ENCODE measurements at regions of chr2 and their contacts with region 1.

Region 1: DNA sequence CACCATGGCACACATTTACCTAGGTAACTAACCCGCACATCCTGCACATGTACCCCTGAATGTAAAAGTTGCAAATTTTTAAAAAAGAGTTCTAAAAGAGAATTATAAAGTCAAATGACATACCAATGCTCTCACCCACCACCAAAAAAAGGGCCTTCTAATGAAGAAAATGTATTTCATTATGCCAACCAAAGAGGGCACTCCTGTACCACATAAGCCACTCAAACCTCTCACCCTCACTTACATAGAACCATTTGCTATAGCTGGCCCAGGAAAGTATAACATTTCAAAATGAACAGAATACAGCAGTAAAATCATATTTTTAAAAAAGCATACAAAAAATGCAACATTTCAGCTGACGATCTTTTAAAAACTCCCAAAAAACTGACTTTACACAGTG is 241.5 kb upstream of the PKDCC start:
- DNase-seq: peak; percentile 43
- H3K4me3 Mint-ChIP-seq: no peak overlapping the region
- H3K27ac Mint-ChIP-seq: no peak overlapping the region
- H3K4me1 Mint-ChIP-seq: peaks cover 9% of the 10 kb centered on the region
- H3K27me3 Mint-ChIP-seq: no peaks in the 10 kb centered on the region
- CTCF ChIP-seq: peak; percentile 38

Region 2: DNA sequence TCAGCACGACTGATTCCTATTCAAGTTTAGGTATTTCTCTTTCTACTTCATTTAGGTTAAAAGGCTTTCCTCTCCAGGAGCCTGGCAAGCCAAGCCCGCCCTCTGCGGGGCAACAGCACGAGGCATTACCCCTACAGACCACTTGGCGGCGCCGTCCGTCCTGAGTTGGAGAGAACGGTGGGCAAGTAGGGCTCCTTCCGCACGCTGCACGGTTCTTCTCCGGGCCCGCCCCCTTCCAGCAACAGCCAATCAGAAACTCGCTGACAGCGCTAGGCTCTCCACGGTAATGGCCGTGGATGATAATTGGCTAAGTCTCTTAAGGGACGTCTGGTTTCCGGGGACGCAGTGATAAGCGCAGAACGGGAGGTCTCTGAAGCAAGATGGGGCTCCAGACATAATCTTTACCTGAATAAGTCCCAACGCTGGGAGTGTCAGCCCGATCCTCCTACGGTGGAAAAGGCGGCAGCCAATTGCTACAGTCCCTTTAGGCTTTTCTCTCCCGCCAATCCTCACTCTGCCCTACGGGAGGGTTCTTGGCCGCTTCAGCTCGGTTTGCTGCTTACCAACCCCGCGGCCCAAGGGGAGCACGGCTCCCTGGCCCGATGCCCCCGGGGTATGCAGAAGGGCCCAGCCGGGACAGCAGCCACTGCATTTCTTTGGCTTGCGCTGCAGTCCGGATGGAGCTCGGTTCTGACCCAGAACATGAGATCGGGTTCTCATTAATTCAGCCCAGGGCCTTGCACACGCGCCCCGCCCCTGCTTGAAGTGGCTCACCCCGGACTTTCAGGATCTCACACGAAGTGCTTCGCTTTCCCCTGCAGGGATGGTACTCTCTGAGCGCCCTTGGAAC is 34.6 kb after region 1 on chr2:
- CTCF ChIA-PET with region 1: interaction called, 3 read pairs
- intact Hi-C with region 1: loop called (anchors 1 kb)
- DNase-seq: peak; percentile 98
- H3K4me3 Mint-ChIP-seq: peak overlapping the region; percentile 96
- H3K27ac Mint-ChIP-seq: peak overlapping the region; percentile 63
- H3K4me1 Mint-ChIP-seq: peaks cover 25% of the 10 kb centered on the region
- H3K27me3 Mint-ChIP-seq: no peaks in the 10 kb centered on the region
- CTCF ChIP-seq: peak; percentile 95

Region 3: GRCh38 chr2:41853427-41854216 is 47.3 kb after region 1 on chr2:
- CTCF ChIA-PET with region 1: interaction called, 3 read pairs
- intact Hi-C with region 1: loop called (anchors 1 kb)
- DNase-seq: peak; percentile 66
- H3K4me3 Mint-ChIP-seq: no peak overlapping the region
- H3K27ac Mint-ChIP-seq: no peak overlapping the region
- H3K4me1 Mint-ChIP-seq: peaks cover 2% of the 10 kb centered on the region
- H3K27me3 Mint-ChIP-seq: no peaks in the 10 kb centered on the region
- CTCF ChIP-seq: peak; percentile 76

Region 4: DNA sequence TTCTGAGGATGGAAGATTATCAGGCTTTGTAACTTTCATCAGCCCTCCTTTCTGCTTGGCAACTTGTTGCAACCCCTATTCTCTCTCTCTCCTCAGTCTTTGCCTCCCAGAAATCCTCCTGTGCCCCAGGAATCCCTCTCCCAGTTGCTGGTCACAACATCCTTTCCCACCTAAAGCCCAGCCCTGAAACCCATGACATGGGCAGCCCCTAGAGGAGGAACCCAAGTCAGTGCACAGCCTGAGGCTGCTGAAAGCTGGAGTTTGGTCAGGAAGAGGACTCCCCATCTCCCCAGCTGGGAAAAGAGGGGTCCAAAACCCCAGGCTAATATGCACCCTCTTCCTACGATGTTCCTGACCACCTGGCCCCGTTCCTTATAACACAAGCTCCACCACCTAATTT is 271.1 kb after region 1 on chr2:
- CTCF ChIA-PET with region 1: interaction called, 3 read pairs
- intact Hi-C with region 1: loop called (anchors 2 kb)
- DNase-seq: no peak
- H3K4me3 Mint-ChIP-seq: no peak overlapping the region
- H3K27ac Mint-ChIP-seq: no peak overlapping the region
- H3K4me1 Mint-ChIP-seq: peaks cover 26% of the 10 kb centered on the region
- H3K27me3 Mint-ChIP-seq: no peaks in the 10 kb centered on the region
- CTCF ChIP-seq: no peak

Region 5: DNA sequence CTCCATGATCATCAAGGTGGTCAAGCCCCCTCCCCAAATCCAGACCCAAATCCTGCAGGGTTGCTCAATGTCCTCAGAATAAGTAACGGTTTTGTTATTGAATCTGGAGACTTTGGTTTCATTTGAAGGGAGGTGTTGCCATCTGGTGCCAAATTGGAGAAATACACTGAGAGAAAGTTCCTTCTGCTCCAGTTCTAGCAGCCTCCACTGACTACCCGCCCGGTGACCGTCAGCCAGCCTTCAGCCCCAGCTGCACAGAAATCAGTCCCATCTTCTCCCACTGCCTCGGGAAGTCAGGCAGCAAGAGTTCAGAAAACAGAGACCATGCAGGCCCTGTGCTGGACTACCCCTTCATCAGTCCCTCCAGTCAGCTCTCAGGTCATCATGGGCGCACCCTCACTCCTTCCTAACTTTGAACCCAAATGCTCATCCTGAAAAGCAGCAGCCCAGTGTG is 280.2 kb after region 1 on chr2:
- CTCF ChIA-PET with region 1: interaction called, 4 read pairs
- intact Hi-C with region 1: loop called (anchors 1 kb)
- DNase-seq: peak; percentile 60
- H3K4me3 Mint-ChIP-seq: no peak overlapping the region
- H3K27ac Mint-ChIP-seq: no peak overlapping the region
- H3K4me1 Mint-ChIP-seq: peaks cover 9% of the 10 kb centered on the region
- H3K27me3 Mint-ChIP-seq: no peaks in the 10 kb centered on the region
- CTCF ChIP-seq: peak; percentile 76

Measured in Calu3 (cell line).